Activated CD4-positive, alpha-beta memory T cell treated with anti-CD3 and anti-CD28 coated beads, Interleukin-2, amount 10 ng/mL, durations not matched to agents 7 days and 5 days (primary cell): ENCODE measurements at regions of chr3 and their contacts with region 1.

Region 1: DNA sequence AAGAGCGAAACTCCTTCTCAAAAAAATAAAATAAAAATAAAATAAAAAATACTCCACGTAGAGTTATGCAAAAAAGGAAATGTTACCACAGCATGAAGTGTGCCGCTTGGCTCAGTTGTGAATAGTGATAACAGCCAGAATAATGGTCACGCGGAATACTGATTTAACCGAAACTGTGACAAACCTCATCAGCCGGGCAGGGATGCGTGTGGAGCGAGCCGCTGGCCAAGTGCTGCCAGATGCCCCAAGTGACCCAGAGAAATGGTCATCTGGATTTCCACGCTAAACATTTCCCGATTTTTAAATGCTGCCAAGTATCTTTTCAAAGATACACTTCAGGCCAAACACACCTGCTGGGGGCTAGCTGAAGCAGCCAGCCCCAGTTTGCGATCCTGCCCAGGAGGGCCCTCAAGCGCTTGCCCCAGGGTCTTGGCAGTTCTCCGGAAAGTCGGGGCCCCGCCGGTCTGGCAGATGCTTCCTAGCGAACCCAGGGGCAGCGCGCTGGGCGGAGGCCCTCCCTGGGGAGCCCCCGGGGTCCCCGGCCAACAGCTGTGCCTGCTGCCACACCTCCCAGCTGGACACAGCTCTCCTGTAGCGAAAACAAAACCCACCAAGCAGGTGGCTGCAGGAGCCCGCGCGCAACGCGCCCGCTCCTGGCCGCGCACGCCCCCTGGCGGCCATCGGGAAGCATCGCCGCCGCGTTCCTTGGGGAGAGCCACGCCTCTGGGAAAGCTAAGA is 35.1 kb downstream of the CMTM6 start:
- DNase-seq: peak; percentile 74
- H3K4me3 Mint-ChIP-seq: no peak overlapping the region
- H3K27ac Mint-ChIP-seq: no peak overlapping the region
- H3K4me1 Mint-ChIP-seq: peaks cover 43% of the 10 kb centered on the region
- H3K27me3 Mint-ChIP-seq: no peaks in the 10 kb centered on the region

Region 2: GRCh38 chr3:32315441-32315840 is 152.1 kb before region 1 on chr3:
- CTCF ChIA-PET with region 1: no interaction called
- POLR2A ChIA-PET with region 1: no interaction called
- DNase-seq: no peak
- H3K4me3 Mint-ChIP-seq: no peak overlapping the region
- H3K27ac Mint-ChIP-seq: no peak overlapping the region
- H3K4me1 Mint-ChIP-seq: peaks cover 17% of the 10 kb centered on the region
- H3K27me3 Mint-ChIP-seq: no peaks in the 10 kb centered on the region

Region 3: GRCh38 chr3:32391643-32392535 is 75.6 kb before region 1 on chr3 and contains the start of gene CMTM7:
- CTCF ChIA-PET with region 1: interaction called, 15 read pairs
- POLR2A ChIA-PET with region 1: interaction called, 10 read pairs
- DNase-seq: peak; percentile 74
- H3K4me3 Mint-ChIP-seq: peak within 1 kb of the TSS; percentile 97
- H3K27ac Mint-ChIP-seq: peak within 1 kb of the TSS; percentile 90
- H3K4me1 Mint-ChIP-seq: peaks cover 52% of the 10 kb centered on the region
- H3K27me3 Mint-ChIP-seq: no peaks in the 10 kb centered on the region
- total RNA-seq, gene CMTM7: 47.0 to 47.3 TPM

Region 4: DNA sequence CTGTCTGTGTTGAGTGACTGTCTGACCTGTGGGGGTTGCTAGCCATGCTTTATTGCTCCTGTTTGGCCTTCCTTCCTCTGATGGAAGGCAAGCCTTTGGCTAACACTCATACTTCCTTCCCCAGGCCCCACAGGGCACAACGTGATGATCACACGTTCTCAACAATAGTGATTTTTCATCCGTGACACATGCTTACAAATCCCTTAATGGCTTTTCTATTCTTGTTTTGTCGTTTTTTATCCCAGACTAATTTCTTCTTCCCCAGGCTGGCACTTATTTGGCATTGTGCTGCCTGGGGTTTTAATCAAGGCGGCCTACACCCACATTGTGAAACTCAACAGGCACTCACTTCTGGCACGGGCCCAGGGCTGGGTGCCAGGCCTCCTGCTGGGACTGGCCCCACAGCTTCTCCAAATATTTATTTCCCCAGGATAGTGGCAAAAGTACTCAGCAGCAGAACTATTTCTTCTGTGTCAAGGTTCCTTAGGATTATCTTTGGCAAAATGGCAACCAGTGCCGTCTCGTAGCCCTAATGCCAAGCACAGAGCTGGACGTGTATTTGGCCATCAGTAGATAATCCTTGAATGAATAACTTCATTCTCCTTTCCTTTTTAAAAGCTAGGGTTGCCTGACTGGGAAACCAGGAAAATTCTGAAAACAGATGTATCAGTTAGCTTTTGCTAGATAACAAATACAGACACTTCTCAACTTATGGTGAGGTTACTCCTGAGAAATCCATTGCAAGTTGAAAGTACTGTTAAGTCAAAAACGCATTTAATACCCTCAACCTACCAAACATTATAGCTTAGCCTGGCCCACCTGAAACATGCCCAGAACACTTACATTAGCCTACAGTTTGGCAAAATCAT is 45.3 kb before region 1 on chr3:
- CTCF ChIA-PET with region 1: interaction called, 16 read pairs
- POLR2A ChIA-PET with region 1: interaction called, 3 read pairs
- DNase-seq: no peak
- H3K4me3 Mint-ChIP-seq: no peak overlapping the region
- H3K27ac Mint-ChIP-seq: no peak overlapping the region
- H3K4me1 Mint-ChIP-seq: peaks cover 86% of the 10 kb centered on the region
- H3K27me3 Mint-ChIP-seq: no peaks in the 10 kb centered on the region

Region 5: DNA sequence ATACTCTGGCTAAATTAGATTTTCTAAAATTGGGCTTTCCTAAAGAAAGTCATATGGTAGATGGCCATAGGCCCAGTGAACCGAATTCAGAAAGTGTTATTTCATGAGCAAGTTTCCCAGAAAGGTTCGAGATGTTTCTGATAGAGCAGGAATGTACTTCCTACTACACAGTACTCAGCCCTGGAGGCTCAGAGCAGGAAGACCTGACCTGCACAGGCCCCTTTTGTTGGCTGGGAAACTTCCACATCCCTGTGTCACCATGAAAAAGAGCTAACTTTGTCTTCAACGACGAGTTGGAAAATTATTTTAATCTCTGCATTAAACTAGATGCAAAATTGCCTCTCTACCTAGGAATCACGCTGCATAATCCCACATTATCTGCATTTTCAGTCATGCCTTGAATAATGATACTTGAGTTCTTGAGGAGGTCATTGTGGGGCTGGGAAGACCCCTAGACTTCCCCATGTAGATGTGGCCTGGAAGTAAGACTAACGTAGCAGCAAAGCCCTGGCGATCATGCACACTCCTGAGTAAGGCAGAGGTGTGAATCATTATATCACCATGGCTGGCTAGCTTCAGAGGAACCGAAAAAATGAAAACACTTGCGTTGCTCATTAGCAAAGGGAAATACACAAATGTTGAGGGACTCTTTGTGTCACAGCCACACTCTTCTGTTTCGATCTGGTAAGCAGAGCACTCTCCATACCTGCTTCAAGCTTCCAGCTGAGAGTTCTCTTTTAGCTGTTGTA is 28.7 kb before region 1 on chr3:
- CTCF ChIA-PET with region 1: interaction called, 16 read pairs
- POLR2A ChIA-PET with region 1: interaction called, 4 read pairs
- DNase-seq: peak; percentile 27
- H3K4me3 Mint-ChIP-seq: peak overlapping the region; percentile 37
- H3K27ac Mint-ChIP-seq: peak overlapping the region; percentile 84
- H3K4me1 Mint-ChIP-seq: peaks cover 69% of the 10 kb centered on the region
- H3K27me3 Mint-ChIP-seq: no peaks in the 10 kb centered on the region